ENCODE measurements at regions of chr20 and their contacts with region 1.

Region 1: DNA sequence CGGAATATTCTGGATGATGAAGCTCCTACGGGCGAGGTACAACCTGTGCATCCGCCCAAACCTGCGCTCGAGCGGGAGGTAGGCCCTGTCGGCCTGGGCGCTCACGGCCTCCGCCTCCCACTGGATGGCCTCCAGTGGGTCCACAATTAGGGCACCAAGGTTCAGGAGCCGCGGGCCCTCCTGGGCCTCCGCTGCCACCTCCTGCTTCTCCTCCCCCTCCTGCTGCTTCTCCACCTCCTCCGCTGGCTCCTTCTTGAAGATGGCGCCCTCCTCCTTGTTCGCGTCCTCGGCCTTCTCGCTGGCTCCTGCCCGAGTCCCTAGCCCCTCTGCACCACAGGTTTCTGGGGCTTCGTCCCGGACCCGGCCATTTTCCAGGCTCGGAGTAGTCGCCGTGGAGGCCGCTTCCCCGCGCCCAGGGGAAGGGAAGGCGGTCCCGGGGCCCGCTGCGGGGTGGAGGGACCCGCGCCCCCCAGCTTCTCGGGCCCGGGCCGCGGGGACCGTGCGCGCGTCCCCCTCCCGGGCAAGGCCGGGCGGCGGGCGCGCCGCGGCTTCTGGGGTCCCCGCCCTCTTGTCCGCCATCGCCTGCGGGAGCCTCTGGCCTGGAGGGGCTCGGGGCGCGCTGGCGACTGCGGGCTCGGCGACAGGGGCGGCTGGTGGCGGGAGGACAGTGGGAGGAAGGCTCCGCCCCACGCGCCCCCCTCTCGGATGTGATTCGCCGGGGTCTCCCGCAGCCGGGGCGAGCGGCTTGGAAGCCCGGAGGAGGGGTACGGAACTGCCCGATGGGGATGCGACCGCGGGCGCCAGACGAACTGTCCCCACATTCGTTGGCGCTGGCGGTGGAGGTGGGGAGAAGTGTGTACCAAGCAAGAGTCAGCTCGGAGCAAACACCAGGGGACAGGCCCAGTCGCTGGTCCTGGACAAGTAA is 17.6 kb downstream of the PLAGL2 start:
- DNase-seq: peak in 1 of 2 experiments; percentile 86
- H3K4me3 ChIP-seq: peak overlapping the region; percentile 53 to 76 (median 69)
- H3K27ac ChIP-seq: peak overlapping the region; percentile 75
- H3K4me1 ChIP-seq: peaks cover 2 to 21% (median 18%) of the 10 kb centered on the region in 4 experiments
- H3K27me3 ChIP-seq: no peaks in the 10 kb centered on the region
- CTCF ChIP-seq: no peak
- EP300 ChIP-seq: no peak
- POLR2A ChIP-seq: no peak; a peak in 1 of 3 replicates
- RAD21 ChIP-seq: no peak

Region 2: GRCh38 chr20:32207626-32208498 is 17.9 kb after region 1 on chr20 and contains the starts of genes PLAGL2 and POFUT1:
- CTCF ChIA-PET with region 1: interaction called, 3 read pairs
- POLR2A ChIA-PET with region 1: interaction called, 77 read pairs
- DNase-seq: peak in 1 of 2 experiments; percentile 89
- H3K4me3 ChIP-seq: peak within 1 kb of the TSS; percentile 53 to 99 (median 95)
- H3K27ac ChIP-seq: peak within 1 kb of the TSS; percentile 82
- H3K4me1 ChIP-seq: peaks cover 0 to 25% (median 20%) of the 10 kb centered on the region in 4 experiments; a peak in 5 of 7 replicates
- H3K27me3 ChIP-seq: no peaks in the 10 kb centered on the region; a peak in 2 of 7 replicates
- CTCF ChIP-seq: peak in 1 of 3 experiments; percentile 12; a peak in 1 of 4 replicates
- EP300 ChIP-seq: peak in 1 of 2 experiments; percentile 81; a peak in 1 of 3 replicates
- POLR2A ChIP-seq: peak; percentile 79 to 96
- RAD21 ChIP-seq: peak in 1 of 2 experiments; percentile 15; a peak in 2 of 4 replicates
- total RNA-seq, gene PLAGL2: 25.4 and 26.1 TPM in 2 replicates
- total RNA-seq, gene POFUT1: 24.4 and 24.5 TPM in 2 replicates

Measured in H1 (cell line).